ENCODE measurements at regions of chr3 and their contacts with region 1.

Region 1: GRCh38 chr3:4978204-4978965 is 852 bp upstream of the BHLHE40 start:
- DNase-seq: peak; percentile 99
- ATAC-seq: peak; percentile 57
- H3K4me3 Mint-ChIP-seq: peak overlapping the region; percentile 93
- H3K27ac Mint-ChIP-seq: peak overlapping the region; percentile 98
- H3K4me1 Mint-ChIP-seq: peaks cover 39% of the 10 kb centered on the region
- H3K27me3 Mint-ChIP-seq: no peaks in the 10 kb centered on the region

Region 2: GRCh38 chr3:4712143-4712542 is 266.2 kb before region 1 on chr3:
- CTCF ChIA-PET with region 1: interaction called, 91 read pairs
- POLR2A ChIA-PET with region 1: interaction called, 4 read pairs
- intact Hi-C with region 1: loop called (anchors 1 kb)
- DNase-seq: no peak
- ATAC-seq: no peak
- H3K4me3 Mint-ChIP-seq: no peak overlapping the region
- H3K27ac Mint-ChIP-seq: no peak overlapping the region
- H3K4me1 Mint-ChIP-seq: no peaks in the 10 kb centered on the region
- H3K27me3 Mint-ChIP-seq: no peaks in the 10 kb centered on the region

Region 3: GRCh38 chr3:4776980-4777581 is 201.3 kb before region 1 on chr3:
- CTCF ChIA-PET with region 1: no interaction called
- POLR2A ChIA-PET with region 1: interaction called, 6 read pairs
- intact Hi-C with region 1: loop called in 1 of 2 experiments (anchors 1 kb)
- DNase-seq: peak; percentile 38
- ATAC-seq: peak; percentile 86
- H3K4me3 Mint-ChIP-seq: no peak overlapping the region
- H3K27ac Mint-ChIP-seq: peak overlapping the region; percentile 91
- H3K4me1 Mint-ChIP-seq: peaks cover 40% of the 10 kb centered on the region
- H3K27me3 Mint-ChIP-seq: no peaks in the 10 kb centered on the region

Region 4: GRCh38 chr3:4845882-4846281 is 132.5 kb before region 1 on chr3:
- CTCF ChIA-PET with region 1: interaction called, 22 read pairs
- POLR2A ChIA-PET with region 1: interaction called, 34 read pairs
- intact Hi-C with region 1: loop called (anchors 1 kb)
- DNase-seq: no peak
- ATAC-seq: peak; percentile 58
- H3K4me3 Mint-ChIP-seq: peak overlapping the region; percentile 16
- H3K27ac Mint-ChIP-seq: peak overlapping the region; percentile 90
- H3K4me1 Mint-ChIP-seq: peaks cover 94% of the 10 kb centered on the region
- H3K27me3 Mint-ChIP-seq: no peaks in the 10 kb centered on the region

Region 5: GRCh38 chr3:4906107-4906621 is 72.2 kb before region 1 on chr3:
- CTCF ChIA-PET with region 1: interaction called, 21 read pairs
- POLR2A ChIA-PET with region 1: interaction called, 9 read pairs
- intact Hi-C with region 1: loop called (anchors 1 to 2 kb)
- DNase-seq: peak; percentile 54
- ATAC-seq: peak; percentile 75
- H3K4me3 Mint-ChIP-seq: no peak overlapping the region
- H3K27ac Mint-ChIP-seq: peak overlapping the region; percentile 53
- H3K4me1 Mint-ChIP-seq: peaks cover 75% of the 10 kb centered on the region
- H3K27me3 Mint-ChIP-seq: no peaks in the 10 kb centered on the region

Region 6: GRCh38 chr3:5057857-5058324 is 79.5 kb after region 1 on chr3:
- CTCF ChIA-PET with region 1: interaction called, 21 read pairs
- POLR2A ChIA-PET with region 1: interaction called, 6 read pairs
- intact Hi-C with region 1: loop called (anchors 1 to 2 kb)
- DNase-seq: peak; percentile 87
- ATAC-seq: peak; percentile 96
- H3K4me3 Mint-ChIP-seq: no peak overlapping the region
- H3K27ac Mint-ChIP-seq: peak overlapping the region; percentile 11
- H3K4me1 Mint-ChIP-seq: peaks cover 17% of the 10 kb centered on the region
- H3K27me3 Mint-ChIP-seq: peaks cover 8% of the 10 kb centered on the region

Region 7: DNA sequence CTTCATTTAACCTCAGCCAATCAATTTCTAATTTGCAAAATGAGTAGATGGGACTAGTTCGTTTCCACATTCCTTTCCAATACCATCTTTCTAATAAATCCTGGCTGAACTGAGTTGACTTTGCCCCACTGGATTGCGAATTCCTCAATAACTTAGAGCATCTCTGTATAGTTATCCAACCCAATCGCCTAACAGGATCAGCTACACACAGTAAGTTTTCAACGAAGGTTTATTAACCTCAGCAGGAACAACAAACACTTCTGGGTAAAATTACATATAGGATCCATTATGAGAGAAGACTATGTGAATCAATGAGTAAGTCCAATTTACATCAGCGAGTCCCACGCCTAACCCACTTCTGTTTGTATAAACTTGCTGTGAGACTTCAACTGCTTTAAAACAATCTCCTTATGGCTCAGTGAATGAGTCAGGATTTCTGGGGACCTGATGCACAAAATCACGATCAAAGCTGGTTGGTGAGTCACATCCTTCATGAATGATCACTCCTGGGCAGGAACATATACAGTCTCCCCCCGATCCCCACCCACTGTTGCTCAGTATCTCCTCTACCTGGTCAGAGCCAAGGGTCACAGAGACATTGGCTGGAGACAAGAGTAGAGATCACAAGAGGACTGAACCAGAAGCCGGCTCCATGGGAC is 351.9 kb after region 1 on chr3:
- CTCF ChIA-PET with region 1: no interaction called
- POLR2A ChIA-PET with region 1: no interaction called
- intact Hi-C with region 1: loop called in 1 of 2 experiments (anchors 5 kb)
- DNase-seq: peak; percentile 71
- ATAC-seq: peak; percentile 88
- H3K4me3 Mint-ChIP-seq: peak overlapping the region; percentile 22
- H3K27ac Mint-ChIP-seq: peak overlapping the region; percentile 77
- H3K4me1 Mint-ChIP-seq: peaks cover 46% of the 10 kb centered on the region
- H3K27me3 Mint-ChIP-seq: peaks cover 5% of the 10 kb centered on the region

Measured in activated CD4-positive, alpha-beta T cell treated with anti-CD3 and anti-CD28 coated beads for 36 hours (primary cell).